ENCODE measurements at regions of chr7 and their contacts with region 1.

Region 1: GRCh38 chr7:322111-322671 is 32.2 kb downstream of the FOXL3 start:
- DNase-seq: peak; percentile 49 to 51
- ATAC-seq: peak; percentile 83 to 94
- H3K4me3 ChIP-seq: 0 out of 3 replicates have a peak overlapping the region, but pooled peaks have one; percentile 1
- H3K27ac ChIP-seq: peak overlapping the region in 1 of 2 experiments; percentile 63; a peak in 2 of 6 replicates
- H3K4me1 ChIP-seq: peaks cover 4% of the 10 kb centered on the region; the same call in 1 of the 3 replicates
- CTCF ChIP-seq: peak; percentile 94
- EP300 ChIP-seq: no peak
- POLR2A ChIP-seq: no peak
- RAD21 ChIP-seq: peak; percentile 82 to 98

Region 2: GRCh38 chr7:179209-179681 is 142.9 kb before region 1 on chr7:
- CTCF ChIA-PET with region 1: no interaction called
- POLR2A ChIA-PET with region 1: no interaction called
- DNase-seq: no peak
- ATAC-seq: no peak
- H3K4me3 ChIP-seq: no peak overlapping the region
- H3K27ac ChIP-seq: no peak overlapping the region
- H3K4me1 ChIP-seq: no peaks in the 10 kb centered on the region
- CTCF ChIP-seq: no peak
- EP300 ChIP-seq: no peak
- POLR2A ChIP-seq: no peak
- RAD21 ChIP-seq: no peak

Region 3: DNA sequence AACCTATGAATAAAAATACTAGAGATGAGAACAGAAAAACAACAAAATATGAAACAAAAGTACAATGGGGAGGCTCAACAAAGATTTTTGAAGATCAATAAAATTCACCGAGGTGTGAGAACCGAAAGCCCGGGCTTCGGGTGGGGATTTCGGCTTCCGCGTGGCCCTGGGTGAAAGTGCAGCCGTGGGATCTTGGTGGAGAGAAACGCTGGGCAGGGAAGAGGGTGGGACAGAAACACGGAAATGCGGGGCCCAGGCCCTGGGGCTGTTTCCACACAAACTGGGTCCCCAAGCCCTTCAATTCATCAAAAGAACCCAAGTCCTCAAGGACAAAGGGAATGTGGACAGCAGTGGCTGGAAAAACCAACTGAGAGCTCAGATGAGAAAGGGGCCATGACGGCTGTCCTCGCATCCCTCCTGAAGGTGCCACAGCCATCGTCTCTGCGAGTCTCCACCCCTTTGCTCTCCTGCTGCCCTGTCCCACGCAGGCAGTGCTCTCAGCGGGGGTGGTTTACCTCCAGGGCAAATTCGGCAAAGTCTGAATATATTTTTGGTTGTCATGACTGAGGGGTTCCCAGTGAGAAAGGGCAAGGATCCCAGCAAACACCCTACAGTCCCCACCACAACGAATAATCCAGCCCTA is 12.5 kb before region 1 on chr7:
- CTCF ChIA-PET with region 1: interaction called, 12 read pairs
- POLR2A ChIA-PET with region 1: no interaction called
- DNase-seq: no peak
- ATAC-seq: no peak
- H3K4me3 ChIP-seq: no peak overlapping the region
- H3K27ac ChIP-seq: no peak overlapping the region
- H3K4me1 ChIP-seq: no peaks in the 10 kb centered on the region
- CTCF ChIP-seq: no peak
- EP300 ChIP-seq: no peak
- POLR2A ChIP-seq: no peak
- RAD21 ChIP-seq: no peak

Region 4: GRCh38 chr7:332646-333392 is 10.6 kb after region 1 on chr7:
- CTCF ChIA-PET with region 1: interaction called, 34 read pairs
- POLR2A ChIA-PET with region 1: no interaction called
- DNase-seq: peak; percentile 76 to 81
- ATAC-seq: peak; percentile 94 to 99
- H3K4me3 ChIP-seq: peak overlapping the region; percentile 64
- H3K27ac ChIP-seq: peak overlapping the region; percentile 81 to 87
- H3K4me1 ChIP-seq: peaks cover 12% of the 10 kb centered on the region
- CTCF ChIP-seq: peak; percentile 88
- EP300 ChIP-seq: no peak
- POLR2A ChIP-seq: no peak
- RAD21 ChIP-seq: peak; percentile 83 to 94

Region 5: GRCh38 chr7:636396-636795 is 314.2 kb after region 1 on chr7:
- CTCF ChIA-PET with region 1: interaction called, 45 read pairs
- POLR2A ChIA-PET with region 1: no interaction called
- DNase-seq: peak; percentile 84 to 85
- ATAC-seq: peak; percentile 98 to 99
- H3K4me3 ChIP-seq: peak overlapping the region; percentile 60
- H3K27ac ChIP-seq: peak overlapping the region; percentile 71 to 78
- H3K4me1 ChIP-seq: peaks cover 11% of the 10 kb centered on the region
- CTCF ChIP-seq: peak; percentile 86
- EP300 ChIP-seq: no peak
- POLR2A ChIP-seq: no peak
- RAD21 ChIP-seq: peak; percentile 94

Region 6: DNA sequence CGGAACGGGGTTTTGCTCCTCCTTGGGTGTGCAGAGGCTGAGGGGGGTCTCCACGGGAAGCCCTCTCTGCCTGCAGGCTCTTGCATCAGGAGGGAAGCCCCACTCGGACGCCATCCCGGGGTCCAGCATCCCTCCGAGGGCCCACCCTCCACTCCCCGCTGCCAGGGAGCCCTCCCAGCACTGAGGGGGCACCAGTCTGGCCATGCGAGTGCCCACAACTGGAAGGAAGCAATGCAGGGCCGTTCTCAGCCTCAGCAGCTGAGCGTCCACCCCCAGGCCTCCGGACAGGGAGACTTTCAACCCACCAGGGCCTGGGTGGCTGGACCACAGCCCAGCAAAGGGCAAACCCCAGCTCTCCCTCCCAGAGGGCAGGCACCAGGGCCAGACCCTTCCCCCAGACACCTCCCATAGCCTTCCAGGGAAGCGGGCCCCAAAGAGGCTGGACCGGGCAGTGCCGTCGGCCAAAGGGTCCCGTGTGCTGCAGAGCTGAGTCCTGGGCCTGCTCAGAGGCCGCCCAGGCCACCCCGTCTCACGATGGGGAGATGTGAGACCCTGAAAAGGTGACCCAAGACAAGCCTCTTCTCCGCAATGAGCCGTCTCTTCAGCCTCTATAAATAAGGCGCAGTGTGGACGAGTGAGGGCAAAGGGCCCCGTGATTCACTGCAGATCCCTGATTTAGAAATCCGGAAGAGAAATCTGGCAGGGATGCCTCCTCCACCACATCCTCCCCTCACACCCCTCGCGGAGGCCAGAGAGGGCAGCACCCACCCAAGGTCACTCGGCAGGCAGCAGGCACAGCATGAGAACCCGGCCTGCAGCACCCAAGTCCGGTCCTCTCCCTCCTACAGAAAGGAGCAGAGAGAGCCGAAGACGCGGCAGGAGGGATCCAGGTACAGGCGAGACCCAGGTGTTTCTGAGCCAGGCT is 322.5 kb after region 1 on chr7:
- CTCF ChIA-PET with region 1: interaction called, 10 read pairs
- POLR2A ChIA-PET with region 1: no interaction called
- DNase-seq: no peak
- ATAC-seq: no peak
- H3K4me3 ChIP-seq: no peak overlapping the region
- H3K27ac ChIP-seq: no peak overlapping the region
- H3K4me1 ChIP-seq: no peaks in the 10 kb centered on the region
- CTCF ChIP-seq: no peak
- EP300 ChIP-seq: no peak
- POLR2A ChIP-seq: no peak
- RAD21 ChIP-seq: no peak

Region 7: DNA sequence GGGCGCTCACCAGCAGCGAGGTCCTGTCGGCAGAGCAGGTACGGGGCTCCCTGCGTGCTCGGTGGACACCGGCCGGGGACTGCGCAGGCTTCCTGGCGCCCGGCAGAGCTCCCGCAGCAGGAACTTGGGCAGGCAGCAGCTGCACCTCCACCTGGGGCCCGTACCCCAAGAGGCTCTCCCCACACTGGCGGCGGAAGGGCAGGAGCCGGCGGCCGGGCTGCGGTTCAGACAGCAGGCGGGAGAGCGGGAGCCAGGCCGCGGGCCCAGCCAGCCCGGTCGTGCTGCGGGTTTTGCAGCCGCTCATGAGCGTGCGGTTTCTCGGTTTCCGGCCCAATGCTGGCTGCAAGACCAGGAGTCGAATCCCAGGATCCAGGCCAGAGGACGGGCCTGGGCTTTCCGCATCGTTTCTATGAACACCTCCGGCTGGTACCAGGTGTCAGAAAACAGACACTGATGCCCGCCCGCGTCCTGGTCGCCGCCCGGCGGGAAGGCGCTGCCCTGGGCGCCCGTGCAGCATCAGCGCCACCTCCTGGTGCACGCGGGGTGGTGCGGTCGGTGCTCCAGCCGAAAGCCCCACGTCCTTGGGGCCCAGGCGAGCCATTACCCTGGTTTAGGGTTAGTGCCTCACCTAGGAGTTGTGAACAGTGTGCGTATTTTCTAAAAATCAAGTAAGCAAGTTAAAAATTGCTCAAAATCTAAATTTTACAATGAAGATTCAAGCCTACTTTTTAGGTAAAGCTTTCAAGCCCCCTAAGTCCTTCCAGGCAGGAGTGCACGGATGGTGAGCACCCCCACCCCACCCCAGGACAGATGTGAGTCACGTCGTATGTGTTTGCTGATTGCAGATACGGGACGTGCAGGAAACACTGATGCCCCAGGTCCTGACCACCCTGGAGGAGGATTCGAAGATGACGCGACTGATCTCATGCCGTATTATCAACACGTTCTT is 452.2 kb after region 1 on chr7:
- CTCF ChIA-PET with region 1: interaction called, 15 read pairs
- POLR2A ChIA-PET with region 1: no interaction called
- DNase-seq: peak; percentile 52 to 53
- ATAC-seq: peak; percentile 72 to 87; a peak in 5 of 6 replicates
- H3K4me3 ChIP-seq: no peak overlapping the region
- H3K27ac ChIP-seq: no peak overlapping the region
- H3K4me1 ChIP-seq: peaks cover 9% of the 10 kb centered on the region; the same call in 2 of the 3 replicates
- CTCF ChIP-seq: peak; percentile 80
- EP300 ChIP-seq: no peak
- POLR2A ChIP-seq: no peak
- RAD21 ChIP-seq: peak; percentile 76 to 81